GM12878 (cell line): ENCODE measurements at regions of chr6 and their contacts with region 1.

Region 1: DNA sequence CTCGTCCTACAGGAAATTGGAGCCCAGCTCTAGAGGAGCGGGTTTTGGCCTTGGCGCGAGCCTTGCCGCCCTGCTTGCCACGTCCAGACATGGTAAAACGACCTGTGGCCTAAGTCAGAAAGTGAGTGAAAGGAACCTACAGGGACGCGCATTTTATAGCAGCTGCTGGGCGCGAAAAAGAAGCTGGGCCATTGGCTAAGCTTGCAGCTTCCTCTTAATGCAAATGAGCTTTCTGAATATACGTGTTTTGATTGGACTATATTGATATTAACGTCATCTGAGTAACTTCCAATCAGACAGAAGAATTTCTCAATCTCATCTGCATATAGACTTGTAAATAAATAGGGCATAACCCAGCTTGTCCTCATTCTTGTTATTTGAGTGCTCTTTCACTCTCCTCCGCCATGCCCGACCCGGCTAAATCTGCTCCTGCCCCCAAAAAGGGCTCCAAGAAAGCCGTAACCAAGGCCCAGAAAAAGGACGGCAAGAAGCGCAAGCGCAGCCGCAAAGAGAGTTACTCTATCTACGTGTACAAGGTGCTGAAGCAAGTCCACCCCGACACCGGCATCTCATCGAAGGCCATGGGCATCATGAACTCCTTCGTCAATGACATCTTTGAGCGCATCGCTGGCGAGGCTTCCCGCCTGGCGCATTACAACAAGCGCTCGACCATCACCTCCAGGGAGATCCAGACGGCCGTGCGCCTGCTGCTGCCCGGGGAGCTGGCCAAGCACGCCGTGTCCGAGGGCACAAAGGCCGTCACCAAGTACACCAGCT is 18.9 kb downstream of the OR2B2 start:
- DNase-seq: peak; percentile 98
- ATAC-seq: peak; percentile 60
- H3K4me3 ChIP-seq: peak overlapping the region; percentile 97
- H3K27ac ChIP-seq: peak overlapping the region; percentile 92
- H3K4me1 ChIP-seq: peaks cover 13% of the 10 kb centered on the region; the same call in 1 of the 2 replicates
- H3K27me3 ChIP-seq: no peaks in the 10 kb centered on the region
- CTCF ChIP-seq: no peak
- EP300 ChIP-seq: no peak
- POLR2A ChIP-seq: peak; percentile 96
- RAD21 ChIP-seq: no peak

Region 2: GRCh38 chr6:26196846-26197648 is 1696.2 kb before region 1 on chr6:
- CTCF ChIA-PET with region 1: no interaction called
- POLR2A ChIA-PET with region 1: interaction called, 5 read pairs
- RAD21 ChIA-PET with region 1: interaction called, 4 read pairs
- SMC1A ChIA-PET with region 1: no interaction called
- in situ Hi-C with region 1: loop called (anchors 5 kb)
- intact Hi-C with region 1: loop called (anchors 5 kb)
- DNase-seq: peak; percentile 99
- ATAC-seq: peak; percentile 61
- H3K4me3 ChIP-seq: peak overlapping the region; percentile 73
- H3K27ac ChIP-seq: peak overlapping the region; percentile 80
- H3K4me1 ChIP-seq: no peaks in the 10 kb centered on the region
- H3K27me3 ChIP-seq: no peaks in the 10 kb centered on the region
- CTCF ChIP-seq: no peak
- EP300 ChIP-seq: no peak
- POLR2A ChIP-seq: peak; percentile 99
- RAD21 ChIP-seq: no peak

Region 3: DNA sequence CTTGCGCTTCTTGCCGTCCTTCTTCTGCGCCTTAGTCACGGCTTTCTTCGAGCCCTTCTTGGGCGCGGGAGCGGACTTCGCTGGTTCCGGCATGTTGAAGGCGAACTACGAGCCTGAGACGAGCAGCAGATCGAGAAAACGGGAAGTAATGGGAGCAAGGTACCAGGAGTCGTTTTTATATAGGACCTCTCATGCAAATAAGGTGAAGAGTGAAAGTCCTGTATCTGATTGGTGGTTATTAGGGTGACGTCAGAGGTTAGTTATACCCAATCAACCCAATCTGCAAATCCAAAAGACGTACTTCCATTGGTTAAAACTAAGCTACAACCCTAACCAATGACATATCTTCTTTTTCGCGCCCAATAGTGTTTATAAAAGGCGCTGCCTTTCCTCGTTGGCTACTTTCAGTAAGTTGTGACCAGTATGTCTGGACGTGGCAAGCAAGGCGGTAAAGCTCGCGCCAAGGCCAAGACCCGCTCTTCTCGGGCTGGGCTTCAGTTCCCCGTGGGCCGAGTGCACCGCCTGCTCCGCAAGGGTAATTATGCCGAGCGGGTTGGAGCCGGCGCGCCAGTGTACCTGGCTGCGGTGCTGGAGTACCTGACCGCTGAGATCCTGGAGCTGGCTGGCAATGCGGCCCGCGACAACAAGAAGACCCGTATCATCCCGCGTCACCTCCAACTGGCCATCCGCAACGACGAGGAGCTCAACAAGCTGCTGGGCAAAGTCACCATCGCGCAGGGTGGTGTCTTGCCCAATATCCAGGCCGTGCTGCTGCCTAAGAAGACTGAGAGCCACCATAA is 746.3 kb before region 1 on chr6:
- CTCF ChIA-PET with region 1: no interaction called
- POLR2A ChIA-PET with region 1: interaction called, 7 read pairs
- RAD21 ChIA-PET with region 1: interaction called, 8 read pairs
- SMC1A ChIA-PET with region 1: interaction called, 5 read pairs
- in situ Hi-C with region 1: no loop called
- intact Hi-C with region 1: loop called (anchors 1 kb)
- DNase-seq: peak; percentile 100
- ATAC-seq: peak; percentile 73
- H3K4me3 ChIP-seq: peak overlapping the region; percentile 92
- H3K27ac ChIP-seq: peak overlapping the region; percentile 98
- H3K4me1 ChIP-seq: peaks cover 10% of the 10 kb centered on the region; the same call in 1 of the 2 replicates
- H3K27me3 ChIP-seq: no peaks in the 10 kb centered on the region
- CTCF ChIP-seq: no peak
- EP300 ChIP-seq: no peak; a peak in 1 of 4 replicates
- POLR2A ChIP-seq: peak; percentile 88
- RAD21 ChIP-seq: no peak

Region 4: GRCh38 chr6:27687154-27688013 is 205.9 kb before region 1 on chr6:
- CTCF ChIA-PET with region 1: interaction called, 4 read pairs
- POLR2A ChIA-PET with region 1: interaction called, 4 read pairs
- RAD21 ChIA-PET with region 1: no interaction called
- SMC1A ChIA-PET with region 1: interaction called, 3 read pairs
- in situ Hi-C with region 1: loop called (anchors 5 kb)
- intact Hi-C with region 1: loop called (anchors 10 kb)
- DNase-seq: peak; percentile 67
- ATAC-seq: peak; percentile 90
- H3K4me3 ChIP-seq: peak overlapping the region; percentile 76
- H3K27ac ChIP-seq: peak overlapping the region; percentile 76
- H3K4me1 ChIP-seq: no peaks in the 10 kb centered on the region
- H3K27me3 ChIP-seq: no peaks in the 10 kb centered on the region
- CTCF ChIP-seq: peak; percentile 91 to 96 (median 93)
- EP300 ChIP-seq: no peak
- POLR2A ChIP-seq: peak; percentile 48; the same call in 1 of the 2 replicates
- RAD21 ChIP-seq: peak; percentile 80

Region 5: DNA sequence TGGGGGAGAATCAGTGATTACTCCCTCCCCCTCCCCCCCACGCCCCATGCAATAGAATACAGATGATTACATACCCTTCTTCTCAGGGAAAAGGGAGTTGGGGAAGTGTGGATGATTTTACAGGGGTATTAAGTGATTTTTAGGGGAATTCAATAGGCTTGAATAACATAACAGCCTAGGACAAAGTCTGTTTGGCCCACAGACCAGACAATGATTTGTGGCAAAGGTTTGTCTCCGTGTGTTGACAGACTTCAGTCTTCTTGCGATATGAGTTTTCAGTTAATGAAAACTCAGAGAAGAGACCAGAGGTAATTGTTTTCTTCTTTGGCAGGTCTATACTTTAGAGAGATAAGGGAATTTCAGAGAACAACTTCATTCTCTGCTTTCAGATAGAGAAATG is 76.3 kb before region 1 on chr6:
- CTCF ChIA-PET with region 1: interaction called, 168 read pairs
- POLR2A ChIA-PET with region 1: interaction called, 125 read pairs
- RAD21 ChIA-PET with region 1: interaction called, 141 read pairs
- SMC1A ChIA-PET with region 1: interaction called, 160 read pairs
- in situ Hi-C with region 1: no loop called
- intact Hi-C with region 1: loop called (anchors 2 kb)
- DNase-seq: no peak
- ATAC-seq: no peak
- H3K4me3 ChIP-seq: no peak overlapping the region
- H3K27ac ChIP-seq: peak overlapping the region; percentile 97
- H3K4me1 ChIP-seq: peaks cover 19% of the 10 kb centered on the region
- H3K27me3 ChIP-seq: no peaks in the 10 kb centered on the region
- CTCF ChIP-seq: no peak
- EP300 ChIP-seq: no peak
- POLR2A ChIP-seq: no peak
- RAD21 ChIP-seq: no peak

Region 6: DNA sequence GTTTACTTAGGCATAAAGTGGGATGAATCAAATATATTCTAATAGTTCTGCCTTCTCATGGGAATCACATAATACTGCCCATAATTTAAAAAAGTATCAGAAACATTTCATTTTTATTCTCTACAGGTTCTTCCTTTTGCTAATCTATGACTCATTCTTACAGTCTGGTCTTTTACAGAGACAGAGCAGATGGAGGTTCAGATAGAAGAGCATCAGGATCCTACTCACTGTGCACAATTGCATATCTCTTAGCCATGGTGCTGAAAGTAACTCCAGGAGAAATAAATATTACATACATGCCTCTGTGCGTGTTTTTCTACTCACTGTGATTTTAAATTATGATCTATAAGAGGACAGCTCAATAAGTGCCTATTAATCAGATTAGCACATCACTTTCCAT is 47.5 kb after region 1 on chr6:
- CTCF ChIA-PET with region 1: no interaction called
- POLR2A ChIA-PET with region 1: no interaction called
- RAD21 ChIA-PET with region 1: no interaction called
- SMC1A ChIA-PET with region 1: no interaction called
- in situ Hi-C with region 1: no loop called
- intact Hi-C with region 1: no loop called
- DNase-seq: no peak
- ATAC-seq: no peak
- H3K4me3 ChIP-seq: no peak overlapping the region
- H3K27ac ChIP-seq: no peak overlapping the region
- H3K4me1 ChIP-seq: no peaks in the 10 kb centered on the region
- H3K27me3 ChIP-seq: no peaks in the 10 kb centered on the region
- CTCF ChIP-seq: no peak
- EP300 ChIP-seq: no peak
- POLR2A ChIP-seq: no peak
- RAD21 ChIP-seq: no peak

Region 7: GRCh38 chr6:28104392-28105244 is 211.4 kb after region 1 on chr6:
- CTCF ChIA-PET with region 1: interaction called, 11 read pairs
- POLR2A ChIA-PET with region 1: interaction called, 3 read pairs
- RAD21 ChIA-PET with region 1: interaction called, 7 read pairs
- SMC1A ChIA-PET with region 1: no interaction called
- in situ Hi-C with region 1: no loop called
- intact Hi-C with region 1: no loop called
- DNase-seq: peak; percentile 60
- ATAC-seq: peak; percentile 99
- H3K4me3 ChIP-seq: peak overlapping the region; percentile 71
- H3K27ac ChIP-seq: peak overlapping the region; percentile 72
- H3K4me1 ChIP-seq: no peaks in the 10 kb centered on the region
- H3K27me3 ChIP-seq: no peaks in the 10 kb centered on the region
- CTCF ChIP-seq: peak; percentile 47 to 80 (median 58)
- EP300 ChIP-seq: 0 out of 4 replicates have a peak, but pooled peaks of 1 of the 2 experiments have one; percentile 18
- POLR2A ChIP-seq: peak; percentile 98
- RAD21 ChIP-seq: 0 out of 2 replicates have a peak, but pooled peaks have one; percentile 28

Region 8: DNA sequence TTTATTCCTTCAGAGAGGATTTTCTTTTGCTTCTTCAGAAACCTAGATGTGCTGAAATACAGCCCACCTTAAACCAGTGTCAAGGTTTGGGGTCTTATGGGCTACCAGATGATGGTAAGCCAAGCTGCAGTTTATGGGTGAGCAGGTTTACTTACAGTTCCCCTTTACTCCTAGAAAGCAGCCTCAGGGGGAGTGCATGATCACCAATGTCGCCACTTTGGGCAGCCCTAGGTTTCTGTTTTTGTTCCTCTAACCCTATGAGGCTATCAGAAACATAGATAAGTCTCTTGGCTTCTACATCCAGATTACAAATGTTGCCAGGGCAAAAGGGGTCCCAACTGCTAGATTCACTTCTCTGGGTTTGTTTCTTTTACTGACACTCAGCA is 963.4 kb after region 1 on chr6:
- CTCF ChIA-PET with region 1: no interaction called
- POLR2A ChIA-PET with region 1: no interaction called
- RAD21 ChIA-PET with region 1: no interaction called
- SMC1A ChIA-PET with region 1: no interaction called
- in situ Hi-C with region 1: no loop called
- intact Hi-C with region 1: no loop called
- DNase-seq: no peak
- ATAC-seq: no peak
- H3K4me3 ChIP-seq: no peak overlapping the region
- H3K27ac ChIP-seq: no peak overlapping the region
- H3K4me1 ChIP-seq: no peaks in the 10 kb centered on the region
- H3K27me3 ChIP-seq: no peaks in the 10 kb centered on the region; a peak in 1 of 4 replicates
- CTCF ChIP-seq: no peak
- EP300 ChIP-seq: no peak
- POLR2A ChIP-seq: no peak
- RAD21 ChIP-seq: no peak